ENCODE measurements at regions of chr11 and their contacts with region 1.

Region 1: DNA sequence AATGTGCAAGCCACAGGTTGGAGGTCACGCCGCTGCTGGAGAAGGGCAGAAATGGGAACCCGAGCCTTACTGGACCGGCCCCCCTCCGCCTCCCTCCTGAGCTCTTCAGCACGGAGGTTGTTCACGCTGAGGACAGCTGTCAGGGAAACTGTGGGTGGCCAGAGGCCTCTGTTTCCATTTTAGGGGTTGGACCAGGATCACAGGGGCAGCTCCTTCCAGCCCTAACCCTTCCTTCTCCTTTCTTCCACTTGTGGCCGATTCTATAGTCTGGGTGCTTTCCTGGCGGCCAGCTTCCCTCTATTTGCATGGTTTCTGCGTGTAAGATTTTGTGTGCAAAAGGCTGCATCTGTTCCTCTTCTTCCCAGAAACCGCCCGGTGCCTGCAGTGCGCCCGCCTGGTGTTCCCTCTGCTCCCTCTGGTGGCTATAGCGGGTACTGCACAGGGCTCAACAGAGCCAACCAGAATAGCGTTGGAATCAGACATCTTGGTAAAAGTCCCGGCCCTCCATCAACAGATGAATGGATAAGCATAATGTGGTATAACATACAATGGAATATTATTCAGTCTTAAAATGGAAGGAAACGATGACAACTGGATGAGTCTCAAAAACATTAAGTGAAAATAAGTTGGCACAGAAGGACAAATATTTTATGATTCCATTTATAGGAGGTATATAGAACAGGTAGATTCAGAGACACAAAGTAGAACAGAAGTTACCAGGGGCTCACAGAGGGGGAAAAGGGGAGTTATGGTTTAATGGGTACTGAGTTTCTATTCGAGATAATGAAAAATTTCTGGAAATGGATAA is 8.4 kb upstream of the SLC22A8 start:
- DNase-seq: peak; percentile 86 to 89
- ATAC-seq: peak; percentile 88 to 95 (median 90)
- H3K4me3 ChIP-seq: no peak overlapping the region
- H3K27ac ChIP-seq: no peak overlapping the region
- H3K4me1 ChIP-seq: peaks cover 0 to 8% (median 5%) of the 10 kb centered on the region in 9 donors
- H3K27me3 ChIP-seq: peaks cover 0 to 19% (median 3%) of the 10 kb centered on the region in 7 donors
- CTCF ChIP-seq: peak; percentile 97 to 100 (median 100)

Region 2: DNA sequence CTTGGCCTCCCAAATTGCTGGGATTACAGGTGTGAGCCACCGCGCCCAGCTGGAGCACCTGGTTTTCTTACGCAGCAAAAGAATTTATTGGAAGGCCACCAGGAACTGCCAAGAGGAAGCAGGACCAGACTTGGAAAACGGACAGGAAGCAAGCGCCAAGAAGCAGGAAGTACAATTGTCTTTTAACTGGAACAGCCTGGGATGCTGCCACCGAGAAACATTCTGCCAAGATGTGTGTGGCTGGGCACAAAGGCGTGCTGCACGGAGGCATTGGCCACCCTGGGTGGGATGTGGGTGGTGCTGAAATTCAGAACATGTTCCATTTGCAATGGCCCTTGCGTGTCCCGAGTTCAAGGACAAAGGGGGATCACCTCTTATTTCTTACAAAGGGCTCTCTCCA is 128.0 kb before region 1 on chr11:
- intact Hi-C with region 1: no loop called
- DNase-seq: peak in 1 of 2 donors; percentile 17
- ATAC-seq: peak in 4 of 8 donors; percentile 14 to 53 (median 30)
- H3K4me3 ChIP-seq: no peak overlapping the region
- H3K27ac ChIP-seq: peak overlapping the region in 5 of 10 donors; percentile 22 to 60 (median 45)
- H3K4me1 ChIP-seq: peaks cover 0 to 19% (median 0%) of the 10 kb centered on the region in 9 donors
- H3K27me3 ChIP-seq: no peaks in the 10 kb centered on the region
- CTCF ChIP-seq: no peak

Region 3: GRCh38 chr11:62911137-62912130 is 112.6 kb before region 1 on chr11:
- intact Hi-C with region 1: loop called (anchors 1 to 2 kb)
- DNase-seq: no peak
- ATAC-seq: no peak
- H3K4me3 ChIP-seq: no peak overlapping the region
- H3K27ac ChIP-seq: no peak overlapping the region
- H3K4me1 ChIP-seq: peaks cover 4 to 24% (median 12%) of the 10 kb centered on the region in 9 donors
- H3K27me3 ChIP-seq: no peaks in the 10 kb centered on the region
- CTCF ChIP-seq: no peak

Region 4: DNA sequence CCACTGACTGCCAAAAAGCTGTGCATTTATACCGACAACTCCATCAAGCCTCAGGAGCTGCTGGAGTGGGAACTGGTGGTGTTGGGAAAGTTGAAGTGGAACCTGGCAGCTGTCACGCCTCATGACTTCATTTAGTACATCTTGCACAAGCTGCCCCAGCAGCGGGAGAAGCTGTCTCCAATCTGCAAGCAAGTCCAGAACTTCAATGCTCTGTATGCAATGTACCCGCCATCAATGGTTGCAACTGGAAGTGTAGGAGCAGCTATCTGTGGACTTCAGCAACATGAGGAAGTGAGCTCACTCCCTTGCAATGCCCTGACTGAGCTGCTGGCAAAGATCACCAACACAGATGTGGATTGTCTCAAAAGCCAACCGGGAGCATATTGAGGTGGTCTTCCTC is 219.5 kb after region 1 on chr11 and contains the start of gene SLC22A25:
- intact Hi-C with region 1: no loop called
- DNase-seq: no peak
- ATAC-seq: no peak
- H3K4me3 ChIP-seq: no peak within 1 kb of the TSS
- H3K27ac ChIP-seq: no peak within 1 kb of the TSS
- H3K4me1 ChIP-seq: no peaks in the 10 kb centered on the region
- H3K27me3 ChIP-seq: peaks cover 0 to 38% (median 16%) of the 10 kb centered on the region in 7 donors
- CTCF ChIP-seq: no peak
- total RNA-seq, gene SLC22A25: not detected

Measured in heart right ventricle (tissue), 16 donors.